ENCODE measurements at regions of chr1 and their contacts with region 1.

Region 1: DNA sequence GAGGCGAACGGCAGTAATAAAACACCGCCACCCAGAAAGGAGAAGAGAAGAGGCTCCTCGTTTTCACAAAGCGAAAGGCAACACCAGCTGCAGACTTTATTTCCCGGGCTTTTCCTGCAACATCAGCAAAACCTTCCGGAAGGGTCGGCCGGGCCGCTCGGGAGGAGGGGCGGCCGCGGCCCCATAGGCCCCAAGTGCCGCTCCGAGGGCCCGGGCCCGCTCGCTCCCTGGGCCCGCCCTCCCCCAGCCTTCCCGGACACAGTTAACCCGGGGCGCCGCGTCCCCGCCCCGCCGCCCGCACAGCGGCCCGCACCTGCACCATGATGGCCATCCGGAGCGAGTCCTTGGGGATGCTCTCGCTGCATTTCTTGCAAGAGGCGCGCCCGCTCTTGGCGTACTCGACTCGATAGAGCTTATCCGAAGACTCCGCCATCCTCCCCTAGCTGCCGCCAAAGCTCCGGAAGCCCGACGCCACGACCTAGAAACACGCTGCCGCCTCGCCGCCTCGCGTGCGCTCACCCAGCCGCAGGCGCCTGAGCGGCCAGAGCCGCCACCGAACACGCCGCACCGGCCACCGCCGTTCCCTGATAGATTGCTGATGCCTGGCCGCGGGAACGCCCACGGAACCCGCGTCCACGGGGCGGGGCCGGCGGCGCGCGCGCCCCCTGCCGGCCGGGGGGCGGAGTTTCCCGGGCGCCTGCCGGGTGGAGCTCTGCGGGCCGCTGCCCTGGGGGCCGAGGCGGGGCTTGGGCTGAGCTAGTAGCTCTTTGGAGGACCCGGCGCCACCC is at the start of gene PARP1:
- DNase-seq: peak; percentile 98
- H3K4me3 ChIP-seq: peak within 1 kb of the TSS; percentile 91
- H3K27ac ChIP-seq: peak within 1 kb of the TSS; percentile 91
- H3K4me1 ChIP-seq: peaks cover 42% of the 10 kb centered on the region
- CTCF ChIP-seq: peak; percentile 85
- total RNA-seq, gene PARP1: 532 and 610 TPM in 2 replicates

Region 2: DNA sequence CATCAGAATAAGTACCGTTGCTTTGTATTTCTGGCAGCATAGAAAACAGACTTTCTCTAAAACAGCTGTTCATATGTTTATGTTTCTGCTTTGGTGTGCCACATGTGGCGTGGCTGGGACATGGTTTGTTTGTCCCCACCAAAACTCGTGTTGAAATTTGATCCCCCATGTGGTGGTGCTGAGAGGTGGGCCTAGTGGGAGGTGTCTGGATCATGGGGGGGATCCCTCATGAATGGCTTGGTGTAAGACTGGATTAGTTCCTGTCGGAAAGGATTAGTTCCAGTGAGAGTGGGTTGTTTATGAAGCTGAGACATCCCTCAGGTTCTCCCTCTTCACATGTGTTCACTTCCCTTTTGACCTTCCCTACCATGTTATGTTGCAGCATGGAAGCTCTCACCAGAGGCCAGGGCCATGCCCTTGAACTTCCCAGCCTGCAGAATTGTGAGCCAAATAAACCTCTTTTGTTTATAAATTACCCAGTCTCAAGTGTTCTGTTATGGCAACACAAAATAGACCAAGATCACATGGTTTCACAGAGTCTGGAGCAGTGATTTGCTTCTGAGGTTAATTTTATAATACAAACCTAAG is 363.1 kb before region 1 on chr1:
- CTCF ChIA-PET with region 1: no interaction called
- POLR2A ChIA-PET with region 1: no interaction called
- intact Hi-C with region 1: no loop called
- DNase-seq: no peak
- H3K4me3 ChIP-seq: no peak overlapping the region
- H3K27ac ChIP-seq: no peak overlapping the region
- H3K4me1 ChIP-seq: peaks cover 8% of the 10 kb centered on the region
- CTCF ChIP-seq: no peak

Region 3: DNA sequence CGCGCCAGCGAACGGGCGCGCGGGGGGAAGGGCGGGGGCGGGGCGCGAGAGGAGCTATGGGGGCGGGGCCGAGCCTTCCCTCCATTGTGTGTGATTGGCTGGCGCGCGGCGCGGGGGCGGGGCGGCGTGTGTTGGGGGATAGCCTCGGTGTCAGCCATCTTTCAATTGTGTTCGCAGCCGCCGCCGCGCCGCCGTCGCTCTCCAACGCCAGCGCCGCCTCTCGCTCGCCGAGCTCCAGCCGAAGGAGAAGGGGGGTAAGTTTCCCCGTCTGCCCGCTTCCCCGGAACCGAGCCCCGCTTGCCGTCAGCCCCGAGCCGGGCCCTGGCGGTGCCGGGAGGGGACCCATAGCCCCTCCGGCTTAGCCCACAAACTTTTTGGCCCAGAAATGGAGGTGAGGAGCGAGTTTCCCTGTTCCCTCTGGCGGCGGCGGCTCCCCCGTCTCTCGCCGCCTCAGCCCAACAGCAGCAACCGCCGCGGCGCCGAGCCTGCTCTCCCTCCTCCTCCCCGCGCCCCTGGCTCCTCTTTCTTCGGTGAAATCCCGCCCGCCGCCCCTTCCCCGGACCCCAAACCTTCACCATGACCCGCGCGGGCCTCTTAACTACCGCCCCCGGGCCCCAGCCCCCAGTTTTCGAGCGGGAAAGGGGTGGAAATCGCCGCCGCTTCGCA is 345.0 kb before region 1 on chr1 and contains the start of gene H3-3A:
- CTCF ChIA-PET with region 1: no interaction called
- POLR2A ChIA-PET with region 1: no interaction called
- intact Hi-C with region 1: loop called (anchors 5 kb)
- DNase-seq: peak; percentile 96
- H3K4me3 ChIP-seq: peak within 1 kb of the TSS; percentile 89
- H3K27ac ChIP-seq: peak within 1 kb of the TSS; percentile 92
- H3K4me1 ChIP-seq: peaks cover 33% of the 10 kb centered on the region
- CTCF ChIP-seq: 0 out of 2 replicates have a peak, but pooled peaks have one; percentile 22
- total RNA-seq, gene H3-3A: 365 and 416 TPM in 2 replicates

Region 4: GRCh38 chr1:226233293-226233692 is 174.4 kb before region 1 on chr1:
- CTCF ChIA-PET with region 1: no interaction called
- POLR2A ChIA-PET with region 1: no interaction called
- intact Hi-C with region 1: no loop called
- DNase-seq: peak; percentile 93
- H3K4me3 ChIP-seq: peak overlapping the region; percentile 60
- H3K27ac ChIP-seq: peak overlapping the region; percentile 81
- H3K4me1 ChIP-seq: peaks cover 51% of the 10 kb centered on the region
- CTCF ChIP-seq: no peak

Region 5: GRCh38 chr1:226332947-226333346 is 74.7 kb before region 1 on chr1:
- CTCF ChIA-PET with region 1: no interaction called
- POLR2A ChIA-PET with region 1: interaction called, 10 read pairs
- intact Hi-C with region 1: no loop called
- DNase-seq: peak; percentile 40
- H3K4me3 ChIP-seq: peak overlapping the region; percentile 55
- H3K27ac ChIP-seq: peak overlapping the region; percentile 69
- H3K4me1 ChIP-seq: peaks cover 62% of the 10 kb centered on the region
- CTCF ChIP-seq: no peak

Region 6: GRCh38 chr1:226390326-226391080 is 17.2 kb before region 1 on chr1:
- CTCF ChIA-PET with region 1: no interaction called
- POLR2A ChIA-PET with region 1: interaction called, 16 read pairs
- intact Hi-C with region 1: no loop called
- DNase-seq: no peak
- H3K4me3 ChIP-seq: no peak overlapping the region
- H3K27ac ChIP-seq: no peak overlapping the region
- H3K4me1 ChIP-seq: no peaks in the 10 kb centered on the region
- CTCF ChIP-seq: no peak

Region 7: GRCh38 chr1:226438007-226438406 is 30.3 kb after region 1 on chr1:
- CTCF ChIA-PET with region 1: interaction called, 4 read pairs
- POLR2A ChIA-PET with region 1: interaction called, 5 read pairs
- intact Hi-C with region 1: loop called (anchors 2 kb)
- DNase-seq: no peak
- H3K4me3 ChIP-seq: peak overlapping the region; percentile 54
- H3K27ac ChIP-seq: peak overlapping the region; percentile 92
- H3K4me1 ChIP-seq: peaks cover 77% of the 10 kb centered on the region
- CTCF ChIP-seq: peak; percentile 54

Region 8: GRCh38 chr1:226461087-226461486 is 53.4 kb after region 1 on chr1:
- CTCF ChIA-PET with region 1: no interaction called
- POLR2A ChIA-PET with region 1: no interaction called
- intact Hi-C with region 1: no loop called
- DNase-seq: no peak
- H3K4me3 ChIP-seq: no peak overlapping the region
- H3K27ac ChIP-seq: no peak overlapping the region
- H3K4me1 ChIP-seq: no peaks in the 10 kb centered on the region
- CTCF ChIP-seq: no peak

Region 9: GRCh38 chr1:226519716-226520598 is 112.3 kb after region 1 on chr1:
- CTCF ChIA-PET with region 1: no interaction called
- POLR2A ChIA-PET with region 1: no interaction called
- intact Hi-C with region 1: no loop called
- DNase-seq: no peak
- H3K4me3 ChIP-seq: no peak overlapping the region
- H3K27ac ChIP-seq: no peak overlapping the region
- H3K4me1 ChIP-seq: no peaks in the 10 kb centered on the region
- CTCF ChIP-seq: no peak

Region 10: GRCh38 chr1:226736908-226737818 is 329.5 kb after region 1 on chr1:
- CTCF ChIA-PET with region 1: no interaction called
- POLR2A ChIA-PET with region 1: no interaction called
- intact Hi-C with region 1: loop called (anchors 5 kb)
- DNase-seq: peak; percentile 83
- H3K4me3 ChIP-seq: peak overlapping the region; percentile 83
- H3K27ac ChIP-seq: peak overlapping the region; percentile 83
- H3K4me1 ChIP-seq: peaks cover 75% of the 10 kb centered on the region
- CTCF ChIP-seq: peak; percentile 56